ENCODE measurements at regions of chr2 and their contacts with region 1.

Region 1: DNA sequence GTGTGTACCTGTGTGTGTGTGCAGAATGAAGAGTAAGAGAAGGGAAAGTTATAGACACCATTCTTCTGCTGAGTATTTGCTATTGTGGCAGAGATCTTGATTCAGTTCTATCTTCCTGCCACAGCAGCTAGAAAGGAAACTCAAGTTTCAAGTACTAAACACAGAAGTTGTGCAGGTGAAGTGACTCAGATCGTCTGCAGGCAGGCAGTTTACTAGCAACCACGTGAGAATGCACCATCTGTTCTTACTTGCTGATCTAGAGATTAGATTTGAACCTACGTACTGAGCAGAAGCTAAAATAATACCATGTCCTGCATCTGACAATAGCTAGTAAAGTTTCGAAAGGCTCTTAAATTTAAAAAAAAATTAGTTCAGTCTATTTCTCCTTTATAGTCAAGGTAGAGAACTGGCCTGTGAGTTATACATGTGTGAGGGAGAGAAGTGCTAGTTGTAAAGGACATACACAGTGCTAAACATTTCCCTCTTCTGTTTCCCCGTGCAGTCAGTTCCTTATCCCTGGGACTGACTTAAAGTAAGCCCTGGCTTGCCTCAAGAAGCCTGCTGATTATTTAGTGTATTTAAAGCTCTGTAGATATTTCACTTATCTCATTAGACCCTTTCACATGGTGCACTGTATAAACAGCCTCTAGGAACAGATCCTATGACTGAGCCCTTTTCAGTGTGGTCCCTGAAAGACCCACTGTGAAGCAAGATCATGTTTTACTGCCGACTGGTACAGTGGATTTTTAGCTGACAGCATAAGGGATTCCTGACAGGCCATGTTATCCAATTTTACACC is 45.0 kb downstream of the SLC38A11 start:
- DNase-seq: peak; percentile 63
- ATAC-seq: peak; percentile 70
- H3K4me3 ChIP-seq: no peak overlapping the region
- H3K27ac ChIP-seq: peak overlapping the region; percentile 60
- H3K4me1 ChIP-seq: peaks cover 58% of the 10 kb centered on the region
- H3K27me3 ChIP-seq: no peaks in the 10 kb centered on the region
- CTCF ChIP-seq: no peak
- EP300 ChIP-seq: no peak
- POLR2A ChIP-seq: no peak
- RAD21 ChIP-seq: no peak

Region 2: DNA sequence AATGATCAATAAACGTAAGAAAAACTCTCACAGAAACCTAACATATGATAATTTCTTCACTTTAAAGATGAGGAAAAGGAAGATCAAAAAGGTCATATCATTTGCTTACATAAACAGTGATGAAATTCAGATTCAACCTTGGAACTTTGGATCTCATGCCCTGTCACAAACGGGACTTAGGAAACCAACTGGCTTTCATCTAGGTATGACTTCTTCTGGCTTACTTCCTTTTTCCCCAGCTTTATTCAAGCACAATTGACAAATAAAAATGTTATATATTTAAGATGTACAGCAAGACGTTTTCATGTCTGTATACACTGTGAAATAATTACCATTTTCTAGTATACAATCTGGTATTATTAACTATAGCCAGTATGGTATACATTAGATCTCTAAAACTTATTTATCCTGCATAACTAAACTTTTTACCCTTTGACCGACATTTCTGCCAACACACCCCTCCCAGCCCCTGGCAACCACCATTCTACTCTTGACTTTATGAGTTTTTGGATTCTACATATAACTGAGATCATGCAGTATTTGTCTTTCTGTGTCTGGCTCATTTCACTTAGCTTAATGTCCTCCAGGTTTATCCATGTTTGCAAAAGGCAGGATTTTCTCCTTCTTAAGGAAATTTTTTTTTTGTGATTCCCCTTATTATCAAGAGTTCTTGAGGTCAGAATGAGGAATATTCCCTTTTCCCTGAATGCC is 22.7 kb before region 1 on chr2:
- CTCF ChIA-PET with region 1: no interaction called
- POLR2A ChIA-PET with region 1: interaction called, 7 read pairs
- in situ Hi-C with region 1: no loop called
- intact Hi-C with region 1: loop called (anchors 2 kb)
- DNase-seq: peak; percentile 97
- ATAC-seq: peak; percentile 94
- H3K4me3 ChIP-seq: peak overlapping the region in 2 of 3 experiments; percentile 24 to 34; a peak in 3 of 6 replicates
- H3K27ac ChIP-seq: peak overlapping the region; percentile 94
- H3K4me1 ChIP-seq: peaks cover 50% of the 10 kb centered on the region
- H3K27me3 ChIP-seq: no peaks in the 10 kb centered on the region
- CTCF ChIP-seq: no peak
- EP300 ChIP-seq: peak; percentile 66 to 99
- POLR2A ChIP-seq: no peak
- RAD21 ChIP-seq: no peak; the same call in 1 of the 2 replicates

Region 3: GRCh38 chr2:164896634-164897355 is 13.5 kb before region 1 on chr2:
- CTCF ChIA-PET with region 1: no interaction called
- POLR2A ChIA-PET with region 1: interaction called, 14 read pairs
- in situ Hi-C with region 1: no loop called
- intact Hi-C with region 1: loop called (anchors 1 kb)
- DNase-seq: peak; percentile 63
- ATAC-seq: peak; percentile 69
- H3K4me3 ChIP-seq: no peak overlapping the region
- H3K27ac ChIP-seq: peak overlapping the region; percentile 41
- H3K4me1 ChIP-seq: peaks cover 34% of the 10 kb centered on the region
- H3K27me3 ChIP-seq: no peaks in the 10 kb centered on the region
- CTCF ChIP-seq: no peak
- EP300 ChIP-seq: no peak; a peak in 1 of 4 replicates
- POLR2A ChIP-seq: no peak
- RAD21 ChIP-seq: no peak